Aorta (tissue), 5 donors: ENCODE measurements at regions of chr6 and their contacts with region 1.

Region 1: GRCh38 chr6:167898673-167899311 is 72.1 kb downstream of the AFDN start:
- DNase-seq: no peak
- ATAC-seq: peak; percentile 52
- H3K4me3 ChIP-seq: no peak overlapping the region
- H3K27ac ChIP-seq: no peak overlapping the region
- H3K4me1 ChIP-seq: no peaks in the 10 kb centered on the region
- H3K27me3 ChIP-seq: no peaks in the 10 kb centered on the region

Region 2: DNA sequence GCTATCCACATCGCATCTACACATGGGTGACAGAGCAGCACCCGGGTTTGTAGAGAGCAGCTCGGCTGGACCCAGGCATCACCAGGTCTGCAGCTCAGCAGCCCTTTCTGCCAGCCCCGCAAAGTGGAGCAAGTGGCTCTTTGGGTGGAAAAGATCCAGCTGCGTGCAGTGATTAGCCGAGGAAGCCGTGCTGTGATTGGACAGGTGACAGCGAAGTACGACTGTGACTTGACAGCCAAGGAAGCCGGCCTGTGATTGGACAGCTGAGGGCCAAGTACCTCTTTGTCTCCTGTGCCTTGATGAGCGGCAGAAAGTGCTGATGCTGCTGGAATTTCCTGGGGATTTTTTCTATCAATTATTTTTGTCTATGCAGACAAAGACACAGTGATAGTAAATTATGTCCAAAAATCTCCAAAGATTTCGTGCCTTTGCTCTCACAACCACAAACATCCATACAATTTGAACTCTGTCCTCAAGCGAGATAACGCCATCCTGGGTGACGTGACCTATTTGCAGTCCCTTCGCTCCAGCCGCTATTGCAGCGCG is 678.8 kb before region 1 on chr6:
- intact Hi-C with region 1: loop called in 1 of 2 experiments (anchors 10 kb)
- DNase-seq: no peak
- ATAC-seq: no peak
- H3K4me3 ChIP-seq: no peak overlapping the region
- H3K27ac ChIP-seq: no peak overlapping the region
- H3K4me1 ChIP-seq: no peaks in the 10 kb centered on the region
- H3K27me3 ChIP-seq: no peaks in the 10 kb centered on the region

Region 3: DNA sequence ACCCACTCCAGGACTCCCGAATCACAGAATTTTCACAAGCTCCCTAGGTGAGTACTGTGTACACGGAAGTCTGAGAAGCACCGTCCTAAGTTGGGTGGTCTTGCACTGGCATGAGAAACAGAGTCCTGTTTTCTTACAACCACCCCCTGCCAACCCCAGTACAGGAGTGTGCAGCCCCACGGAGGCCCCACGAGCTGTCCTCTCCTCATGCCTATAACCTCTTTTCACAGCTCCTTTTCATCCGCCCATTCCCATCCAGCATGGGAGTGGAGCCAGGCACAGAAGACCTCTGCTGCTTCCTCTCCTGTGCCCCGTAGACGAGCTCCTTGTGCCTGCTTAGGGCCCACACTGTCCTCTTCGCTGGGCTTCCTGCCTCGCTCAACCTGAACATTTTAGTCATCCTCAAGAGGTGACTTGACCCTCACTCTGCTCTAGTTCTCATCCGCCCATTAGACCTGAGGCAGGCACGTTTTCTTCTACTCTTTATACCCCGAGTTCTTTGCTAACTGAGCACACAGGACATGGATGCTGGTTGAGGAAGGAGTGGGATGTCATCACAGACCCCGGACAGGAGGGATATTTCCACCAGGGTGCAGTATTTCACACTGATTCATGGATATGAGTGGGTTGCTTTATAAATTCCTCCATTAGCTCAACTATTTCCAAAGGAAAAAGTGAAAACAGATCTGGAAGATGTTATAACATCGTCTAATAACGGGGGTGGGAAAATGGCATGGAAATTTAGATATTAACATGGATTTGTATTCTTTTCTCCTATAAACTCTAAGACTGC is 413.4 kb before region 1 on chr6:
- intact Hi-C with region 1: loop called (anchors 2 kb)
- DNase-seq: no peak
- ATAC-seq: peak; percentile 68
- H3K4me3 ChIP-seq: no peak overlapping the region
- H3K27ac ChIP-seq: no peak overlapping the region
- H3K4me1 ChIP-seq: no peaks in the 10 kb centered on the region
- H3K27me3 ChIP-seq: no peaks in the 10 kb centered on the region